AG04450 (cell line): ENCODE measurements at regions of chr3 and their contacts with region 1.

Region 1: GRCh38 chr3:47324278-47324865 is 41.6 kb downstream of the KLHL18 start:
- DNase-seq: peak; percentile 50
- H3K4me3 ChIP-seq: no peak overlapping the region
- H3K27ac ChIP-seq: no peak overlapping the region
- H3K27me3 ChIP-seq: no peaks in the 10 kb centered on the region
- CTCF ChIP-seq: peak; percentile 80

Region 2: GRCh38 chr3:46725621-46726314 is 598.6 kb before region 1 on chr3:
- CTCF ChIA-PET with region 1: interaction called, 12 read pairs
- POLR2A ChIA-PET with region 1: no interaction called
- DNase-seq: no peak
- H3K4me3 ChIP-seq: no peak overlapping the region
- H3K27ac ChIP-seq: no peak overlapping the region
- H3K27me3 ChIP-seq: peaks cover 4% of the 10 kb centered on the region
- CTCF ChIP-seq: no peak

Region 3: GRCh38 chr3:46923559-46924350 is 400.6 kb before region 1 on chr3:
- CTCF ChIA-PET with region 1: interaction called, 32 read pairs
- POLR2A ChIA-PET with region 1: no interaction called
- DNase-seq: no peak
- H3K4me3 ChIP-seq: no peak overlapping the region
- H3K27ac ChIP-seq: no peak overlapping the region
- H3K27me3 ChIP-seq: no peaks in the 10 kb centered on the region
- CTCF ChIP-seq: peak; percentile 71

Region 4: DNA sequence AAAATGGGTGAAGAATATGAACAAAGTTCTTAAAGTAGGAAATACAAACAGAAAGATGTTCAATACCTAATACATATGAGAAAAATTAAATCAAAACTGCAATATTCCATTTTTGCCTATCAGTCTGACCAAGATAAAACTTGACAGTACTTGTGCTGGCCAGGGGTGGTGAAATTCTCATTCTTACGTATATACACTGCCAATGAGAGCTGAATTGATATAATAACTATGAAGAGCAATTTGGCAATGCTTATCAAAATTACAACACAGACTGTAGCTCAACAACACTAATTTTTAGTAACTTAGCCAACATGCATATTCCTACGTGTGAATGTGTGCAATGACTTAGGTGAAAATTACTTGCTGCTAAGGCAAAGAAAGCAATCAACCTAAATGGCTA is 250.7 kb before region 1 on chr3:
- CTCF ChIA-PET with region 1: interaction called, 16 read pairs
- POLR2A ChIA-PET with region 1: no interaction called
- DNase-seq: no peak
- H3K4me3 ChIP-seq: no peak overlapping the region
- H3K27ac ChIP-seq: no peak overlapping the region
- H3K27me3 ChIP-seq: no peaks in the 10 kb centered on the region
- CTCF ChIP-seq: no peak

Region 5: GRCh38 chr3:47164007-47164881 is 160.1 kb before region 1 on chr3 and contains the start of gene SETD2:
- CTCF ChIA-PET with region 1: interaction called, 11 read pairs
- POLR2A ChIA-PET with region 1: no interaction called
- DNase-seq: peak; percentile 69
- H3K4me3 ChIP-seq: peak within 1 kb of the TSS; percentile 77
- H3K27ac ChIP-seq: peak within 1 kb of the TSS; percentile 75
- H3K27me3 ChIP-seq: no peaks in the 10 kb centered on the region
- CTCF ChIP-seq: peak; percentile 31
- polyA plus RNA-seq, gene SETD2: 25.9 and 30.8 TPM in 2 replicates